PC-3 (cell line): ENCODE measurements at regions of chr12 and their contacts with region 1.

Region 1: GRCh38 chr12:56645717-56646446 is at the start of gene ATP5F1B:
- DNase-seq: peak; percentile 99
- ATAC-seq: peak; percentile 99
- H3K4me3 ChIP-seq: peak within 1 kb of the TSS; percentile 94
- H3K27ac ChIP-seq: peak within 1 kb of the TSS; percentile 80
- H3K4me1 ChIP-seq: peaks cover 23% of the 10 kb centered on the region
- H3K27me3 ChIP-seq: no peaks in the 10 kb centered on the region
- CTCF ChIP-seq: no peak
- total RNA-seq, gene ATP5F1B: 981 and 1,046 TPM in 2 replicates

Region 2: DNA sequence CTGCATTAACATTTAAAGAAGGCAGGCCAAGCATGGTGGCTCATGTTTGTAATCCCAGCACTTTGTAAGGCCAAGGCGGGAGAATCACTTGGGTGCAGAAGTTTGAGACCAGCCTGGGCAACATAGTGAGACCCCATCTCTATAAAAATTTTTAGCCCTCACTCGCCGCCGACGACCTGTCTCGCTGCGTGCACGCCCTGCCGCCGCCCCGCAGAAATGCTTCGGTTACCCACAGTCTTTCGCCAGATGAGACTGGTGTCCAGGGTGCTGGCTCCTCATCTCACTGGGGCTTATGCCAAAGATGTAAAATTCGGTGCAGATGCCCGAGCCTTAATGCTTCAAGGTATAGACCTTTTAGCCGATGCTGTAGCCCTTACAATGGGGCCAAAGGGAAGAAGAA is 135.1 kb before region 1 on chr12:
- CTCF ChIA-PET with region 1: no interaction called
- POLR2A ChIA-PET with region 1: no interaction called
- intact Hi-C with region 1: no loop called
- DNase-seq: no peak
- ATAC-seq: no peak
- H3K4me3 ChIP-seq: no peak overlapping the region
- H3K27ac ChIP-seq: no peak overlapping the region
- H3K4me1 ChIP-seq: no peaks in the 10 kb centered on the region
- H3K27me3 ChIP-seq: no peaks in the 10 kb centered on the region
- CTCF ChIP-seq: no peak

Region 3: GRCh38 chr12:56581418-56582145 is 64.3 kb before region 1 on chr12:
- CTCF ChIA-PET with region 1: no interaction called
- POLR2A ChIA-PET with region 1: no interaction called
- intact Hi-C with region 1: no loop called
- DNase-seq: peak; percentile 78
- ATAC-seq: peak; percentile 81
- H3K4me3 ChIP-seq: no peak overlapping the region
- H3K27ac ChIP-seq: peak overlapping the region; percentile 50
- H3K4me1 ChIP-seq: peaks cover 22% of the 10 kb centered on the region
- H3K27me3 ChIP-seq: no peaks in the 10 kb centered on the region
- CTCF ChIP-seq: no peak

Region 4: DNA sequence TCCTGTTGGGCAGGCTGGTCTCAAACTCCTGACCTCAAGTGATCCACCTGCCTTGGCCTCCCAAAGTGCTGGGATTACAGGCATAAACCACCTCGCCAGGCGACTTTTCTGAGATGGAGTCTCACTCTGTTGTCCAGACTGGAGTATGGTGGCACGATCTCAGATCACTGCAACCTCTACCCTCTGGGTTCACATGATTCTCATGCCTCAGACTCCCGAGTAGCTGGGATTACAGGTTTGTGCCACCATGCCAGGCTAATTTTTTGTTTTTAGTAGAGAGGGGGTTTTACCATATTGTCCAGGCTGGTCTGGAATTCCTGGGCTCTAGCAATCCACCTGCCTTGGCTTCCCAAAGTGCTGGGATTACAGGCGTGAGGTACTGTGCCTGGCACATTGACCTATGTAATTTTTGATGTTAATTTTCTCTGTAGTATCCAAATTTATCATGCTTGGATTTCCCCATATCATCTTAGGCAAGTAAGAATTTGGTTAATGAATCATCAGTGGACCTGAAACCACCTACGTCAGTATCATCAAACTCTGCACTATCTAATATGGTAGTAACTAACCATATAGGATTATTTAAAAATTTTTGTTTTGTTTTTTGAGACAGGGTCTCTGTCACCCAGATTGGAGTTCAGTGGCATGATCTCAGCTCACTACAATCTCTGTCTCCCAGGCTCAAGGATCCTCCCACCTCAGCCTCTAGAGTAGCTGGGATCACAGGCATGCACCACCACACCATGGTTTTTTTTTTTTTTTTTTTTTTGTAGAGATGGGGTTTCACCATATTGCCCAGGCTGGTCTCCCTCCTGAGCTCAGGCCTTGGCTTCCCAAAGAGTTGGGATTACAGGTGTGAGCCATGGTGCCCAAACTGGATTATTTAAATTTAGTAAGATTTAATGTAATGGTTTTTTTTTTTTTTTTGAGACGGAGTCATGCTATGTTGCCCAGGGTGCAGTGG is 11.8 kb after region 1 on chr12:
- CTCF ChIA-PET with region 1: interaction called, 5 read pairs
- POLR2A ChIA-PET with region 1: interaction called, 17 read pairs
- intact Hi-C with region 1: no loop called
- DNase-seq: no peak
- ATAC-seq: no peak
- H3K4me3 ChIP-seq: no peak overlapping the region
- H3K27ac ChIP-seq: no peak overlapping the region
- H3K4me1 ChIP-seq: peaks cover 11% of the 10 kb centered on the region
- H3K27me3 ChIP-seq: no peaks in the 10 kb centered on the region
- CTCF ChIP-seq: no peak

Region 5: DNA sequence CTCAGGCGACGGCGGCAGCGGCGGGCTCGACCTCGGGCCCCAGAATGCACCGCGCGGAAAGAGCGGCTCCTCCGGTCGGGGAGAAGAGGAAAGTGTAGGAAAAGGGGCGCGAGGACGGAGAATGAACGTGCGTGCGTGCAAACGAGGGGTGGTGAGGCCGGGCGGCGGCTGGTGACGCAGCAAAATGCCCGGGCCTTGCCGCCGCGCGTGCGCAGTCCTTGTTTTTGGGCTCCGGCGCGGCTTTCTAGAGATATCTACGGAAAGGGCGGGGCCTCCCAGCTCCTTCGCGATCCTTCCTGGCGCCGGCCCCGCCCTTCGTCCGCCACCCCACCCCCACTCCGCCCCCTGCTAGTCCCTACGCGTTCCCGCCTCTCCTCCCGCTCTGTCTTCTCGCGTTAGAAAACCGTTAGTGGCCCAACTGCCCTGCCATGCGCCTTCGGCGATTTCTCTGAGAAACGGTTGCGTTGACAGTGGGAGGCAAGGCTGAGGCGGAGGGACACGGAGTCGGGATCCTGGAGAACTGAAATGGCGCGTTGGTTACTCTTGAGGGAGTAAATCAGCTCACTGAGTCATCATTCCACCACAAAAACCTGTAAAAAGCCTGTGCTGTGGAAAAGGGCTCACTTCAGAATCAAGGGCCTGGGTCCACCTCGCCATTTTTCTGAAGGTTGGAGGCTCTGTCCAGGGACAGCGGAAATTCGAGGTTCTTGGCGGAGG is 42.4 kb after region 1 on chr12 and contains the start of gene PTGES3:
- CTCF ChIA-PET with region 1: no interaction called
- POLR2A ChIA-PET with region 1: interaction called, 5 read pairs
- intact Hi-C with region 1: loop called (anchors 1 kb)
- DNase-seq: peak; percentile 98
- ATAC-seq: peak; percentile 82
- H3K4me3 ChIP-seq: peak within 1 kb of the TSS; percentile 95
- H3K27ac ChIP-seq: peak within 1 kb of the TSS; percentile 87
- H3K4me1 ChIP-seq: peaks cover 10% of the 10 kb centered on the region
- H3K27me3 ChIP-seq: no peaks in the 10 kb centered on the region
- CTCF ChIP-seq: no peak
- total RNA-seq, gene PTGES3: 165 and 172 TPM in 2 replicates

Region 6: GRCh38 chr12:56724972-56725722 is 79.3 kb after region 1 on chr12 and contains the start of gene NACA:
- CTCF ChIA-PET with region 1: no interaction called
- POLR2A ChIA-PET with region 1: no interaction called
- intact Hi-C with region 1: loop called (anchors 1 kb)
- DNase-seq: peak; percentile 97
- ATAC-seq: peak; percentile 94
- H3K4me3 ChIP-seq: peak within 1 kb of the TSS; percentile 88
- H3K27ac ChIP-seq: peak within 1 kb of the TSS; percentile 77
- H3K4me1 ChIP-seq: peaks cover 39% of the 10 kb centered on the region
- H3K27me3 ChIP-seq: no peaks in the 10 kb centered on the region
- CTCF ChIP-seq: no peak
- total RNA-seq, gene NACA: 839 and 1,420 TPM in 2 replicates